ENCODE measurements at regions of chr12 and their contacts with region 1.

Region 1: DNA sequence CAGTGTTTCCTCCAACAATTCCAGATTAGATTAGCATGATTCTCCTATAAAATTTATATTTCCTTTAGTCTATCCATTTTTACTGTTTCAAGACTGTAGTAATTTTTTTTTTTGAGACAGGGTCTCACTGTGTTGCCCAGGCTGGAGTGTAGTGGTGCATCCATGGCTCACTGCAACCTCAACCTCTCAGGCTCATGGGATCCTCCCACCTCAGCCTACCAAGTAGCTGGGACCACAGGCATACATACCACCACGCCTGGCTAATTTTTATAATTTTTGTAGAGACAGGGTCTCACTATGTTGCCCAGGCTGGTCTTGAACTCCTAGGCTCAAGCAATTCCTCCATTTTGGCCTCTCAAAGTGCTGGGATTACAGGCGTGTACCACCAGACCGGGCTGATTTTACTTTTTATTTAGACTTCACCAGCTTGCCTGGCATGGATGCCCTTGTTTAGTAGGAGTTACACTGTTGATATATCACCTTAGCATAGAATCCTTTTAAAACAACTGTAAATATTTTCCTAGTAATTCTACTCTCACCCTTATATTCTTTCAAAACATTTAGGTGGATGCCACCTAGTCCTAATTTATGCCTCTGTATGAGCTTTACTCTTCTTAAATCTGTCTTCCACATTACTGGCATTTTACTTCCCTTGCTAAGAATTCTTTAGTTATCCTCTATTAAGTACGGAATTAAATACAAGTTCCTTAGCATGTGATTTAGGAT is 55.8 kb upstream of the LIMA1 start:
- DNase-seq: no peak
- H3K4me3 ChIP-seq: no peak overlapping the region
- H3K27ac ChIP-seq: no peak overlapping the region
- H3K4me1 ChIP-seq: no peaks in the 10 kb centered on the region
- H3K27me3 ChIP-seq: no peaks in the 10 kb centered on the region
- CTCF ChIP-seq: no peak

Region 2: DNA sequence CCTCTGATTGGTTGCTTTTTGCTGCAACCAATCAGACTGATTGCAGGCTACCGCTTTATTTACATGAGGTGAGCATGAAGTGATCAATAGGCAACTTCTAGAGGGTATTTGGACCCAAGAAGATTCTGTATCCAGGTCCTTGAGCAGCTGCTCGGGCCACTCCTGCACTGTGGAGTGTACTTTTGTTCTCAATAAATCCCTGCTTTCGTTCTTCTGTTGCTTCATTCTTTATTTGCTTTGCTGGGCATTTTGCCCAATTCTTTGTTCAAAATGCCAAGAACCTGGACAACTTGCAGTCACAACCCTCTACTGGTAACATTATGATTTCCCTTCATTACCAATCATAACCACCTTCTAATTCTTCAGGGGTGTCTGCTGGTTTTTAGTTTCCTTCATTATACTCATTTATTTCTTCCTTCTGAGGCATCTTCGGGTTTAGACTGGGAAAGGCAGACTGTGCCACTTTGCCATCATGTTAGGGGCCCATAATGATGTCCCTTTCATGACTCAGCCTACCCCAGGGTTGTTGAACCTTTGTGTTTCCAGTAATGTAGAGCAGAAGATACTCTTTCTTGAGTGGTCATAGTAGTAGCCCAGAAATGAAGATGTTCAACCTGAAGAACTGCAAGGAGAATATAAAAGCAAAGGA is 12.3 kb before region 1 on chr12:
- CTCF ChIA-PET with region 1: interaction called, 10 read pairs
- POLR2A ChIA-PET with region 1: no interaction called
- intact Hi-C with region 1: no loop called
- DNase-seq: peak; percentile 47
- H3K4me3 ChIP-seq: no peak overlapping the region
- H3K27ac ChIP-seq: no peak overlapping the region
- H3K4me1 ChIP-seq: no peaks in the 10 kb centered on the region
- H3K27me3 ChIP-seq: no peaks in the 10 kb centered on the region
- CTCF ChIP-seq: no peak

Region 3: GRCh38 chr12:50362671-50363070 is 23.6 kb after region 1 on chr12:
- CTCF ChIA-PET with region 1: no interaction called
- POLR2A ChIA-PET with region 1: no interaction called
- intact Hi-C with region 1: no loop called
- DNase-seq: no peak
- H3K4me3 ChIP-seq: no peak overlapping the region
- H3K27ac ChIP-seq: no peak overlapping the region
- H3K4me1 ChIP-seq: no peaks in the 10 kb centered on the region
- H3K27me3 ChIP-seq: no peaks in the 10 kb centered on the region
- CTCF ChIP-seq: no peak

Region 4: DNA sequence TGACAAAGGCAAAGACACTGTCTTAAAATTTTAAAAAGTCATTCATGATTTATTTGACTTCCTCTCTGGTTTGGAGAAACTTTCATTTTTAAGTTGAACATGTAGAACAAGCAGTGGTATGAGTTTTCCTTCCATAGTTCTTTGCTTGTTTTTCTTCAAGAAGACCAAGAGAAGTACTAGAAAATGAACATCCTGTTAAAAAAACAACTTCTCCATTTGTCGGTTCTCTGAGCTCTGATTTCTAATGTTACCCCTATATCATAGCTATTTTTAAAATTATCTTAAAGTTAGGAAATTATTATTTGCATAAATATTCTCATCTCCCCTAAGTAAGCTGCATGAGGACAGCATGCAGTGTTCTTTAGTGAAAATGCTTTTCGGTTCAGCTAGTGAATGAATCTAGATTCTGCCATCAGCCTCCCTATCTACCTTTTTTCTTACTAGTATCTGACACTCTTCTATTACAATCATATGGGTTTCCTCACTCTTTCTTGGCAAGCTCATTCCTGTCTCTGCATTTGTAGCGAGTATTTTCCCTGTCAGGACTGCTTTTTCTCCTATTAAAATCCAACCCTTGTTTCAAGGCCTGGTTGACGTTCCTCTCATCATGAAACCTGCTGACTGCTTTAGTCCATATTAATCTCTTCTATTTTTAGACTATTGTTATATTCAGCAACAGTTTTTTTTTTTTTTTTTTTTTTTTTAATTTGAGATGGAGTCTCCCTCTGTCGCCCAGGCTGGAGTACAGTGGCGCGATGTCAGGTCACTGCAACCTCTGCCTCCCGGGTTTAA is 181.5 kb after region 1 on chr12:
- CTCF ChIA-PET with region 1: no interaction called
- POLR2A ChIA-PET with region 1: no interaction called
- intact Hi-C with region 1: no loop called
- DNase-seq: peak; percentile 31
- H3K4me3 ChIP-seq: no peak overlapping the region
- H3K27ac ChIP-seq: peak overlapping the region; percentile 51
- H3K4me1 ChIP-seq: peaks cover 28% of the 10 kb centered on the region
- H3K27me3 ChIP-seq: no peaks in the 10 kb centered on the region
- CTCF ChIP-seq: no peak

Measured in A673 (cell line).